ENCODE measurements at regions of chr5 and their contacts with region 1.

Region 1: GRCh38 chr5:147576646-147577535 is 67.0 kb upstream of the DPYSL3 start:
- DNase-seq: peak in 1 of 2 experiments; percentile 91
- H3K4me3 ChIP-seq: no peak overlapping the region
- H3K27ac ChIP-seq: no peak overlapping the region
- H3K4me1 ChIP-seq: peaks cover 12 to 21% (median 15%) of the 10 kb centered on the region in 4 experiments; a peak in 5 of 7 replicates
- H3K27me3 ChIP-seq: no peaks in the 10 kb centered on the region
- CTCF ChIP-seq: peak; percentile 87 to 90 (median 88)
- EP300 ChIP-seq: no peak
- POLR2A ChIP-seq: no peak
- RAD21 ChIP-seq: peak; percentile 69 to 77

Region 2: DNA sequence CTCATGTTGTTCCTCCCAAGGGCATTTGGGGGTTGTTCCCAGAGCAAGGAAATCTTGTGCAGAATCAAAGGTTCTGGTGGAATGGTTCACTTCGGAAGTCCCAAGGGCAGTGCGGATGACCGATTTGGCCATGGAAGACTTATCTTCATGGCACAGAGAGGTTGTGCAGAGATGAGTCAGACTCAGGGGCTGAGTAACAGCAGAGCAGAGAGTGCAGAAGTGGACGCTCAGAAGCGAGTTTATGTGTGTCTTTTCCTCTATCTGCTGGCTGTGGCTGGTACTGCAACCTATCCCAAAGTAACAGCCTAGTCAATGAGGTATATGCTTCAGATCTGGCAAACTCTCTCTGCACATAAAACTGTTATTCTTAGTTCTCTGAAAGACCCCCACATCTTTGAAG is 185.1 kb before region 1 on chr5:
- CTCF ChIA-PET with region 1: interaction called, 12 read pairs
- POLR2A ChIA-PET with region 1: no interaction called
- DNase-seq: no peak
- H3K4me3 ChIP-seq: no peak overlapping the region
- H3K27ac ChIP-seq: no peak overlapping the region
- H3K4me1 ChIP-seq: peaks cover 4 to 10% (median 8%) of the 10 kb centered on the region in 4 experiments; a peak in 5 of 7 replicates
- H3K27me3 ChIP-seq: no peaks in the 10 kb centered on the region; a peak in 1 of 7 replicates
- CTCF ChIP-seq: peak; percentile 2 to 67 (median 16); a peak in 3 of 4 replicates
- EP300 ChIP-seq: no peak
- POLR2A ChIP-seq: peak in 1 of 2 experiments; percentile 45; a peak in 1 of 3 replicates
- RAD21 ChIP-seq: peak; percentile 50 to 65

Region 3: GRCh38 chr5:147417135-147417813 is 159.6 kb before region 1 on chr5:
- CTCF ChIA-PET with region 1: interaction called, 26 read pairs
- POLR2A ChIA-PET with region 1: no interaction called
- DNase-seq: no peak
- H3K4me3 ChIP-seq: no peak overlapping the region
- H3K27ac ChIP-seq: no peak overlapping the region
- H3K4me1 ChIP-seq: no peaks in the 10 kb centered on the region; a peak in 1 of 7 replicates
- H3K27me3 ChIP-seq: no peaks in the 10 kb centered on the region
- CTCF ChIP-seq: no peak
- EP300 ChIP-seq: no peak
- POLR2A ChIP-seq: no peak
- RAD21 ChIP-seq: no peak

Region 4: GRCh38 chr5:147453875-147454814 is 122.7 kb before region 1 on chr5:
- CTCF ChIA-PET with region 1: interaction called, 45 read pairs
- POLR2A ChIA-PET with region 1: interaction called, 14 read pairs
- DNase-seq: peak; percentile 70 to 94
- H3K4me3 ChIP-seq: peak overlapping the region; percentile 80 to 98 (median 94)
- H3K27ac ChIP-seq: peak overlapping the region; percentile 79; the same call in 1 of the 2 replicates
- H3K4me1 ChIP-seq: peaks cover 9 to 30% (median 25%) of the 10 kb centered on the region in 4 experiments; a peak in 6 of 7 replicates
- H3K27me3 ChIP-seq: no peaks in the 10 kb centered on the region
- CTCF ChIP-seq: peak; percentile 70 to 83 (median 70)
- EP300 ChIP-seq: no peak
- POLR2A ChIP-seq: peak in 1 of 2 experiments; percentile 58; a peak in 2 of 3 replicates
- RAD21 ChIP-seq: peak; percentile 76 to 77

Region 5: DNA sequence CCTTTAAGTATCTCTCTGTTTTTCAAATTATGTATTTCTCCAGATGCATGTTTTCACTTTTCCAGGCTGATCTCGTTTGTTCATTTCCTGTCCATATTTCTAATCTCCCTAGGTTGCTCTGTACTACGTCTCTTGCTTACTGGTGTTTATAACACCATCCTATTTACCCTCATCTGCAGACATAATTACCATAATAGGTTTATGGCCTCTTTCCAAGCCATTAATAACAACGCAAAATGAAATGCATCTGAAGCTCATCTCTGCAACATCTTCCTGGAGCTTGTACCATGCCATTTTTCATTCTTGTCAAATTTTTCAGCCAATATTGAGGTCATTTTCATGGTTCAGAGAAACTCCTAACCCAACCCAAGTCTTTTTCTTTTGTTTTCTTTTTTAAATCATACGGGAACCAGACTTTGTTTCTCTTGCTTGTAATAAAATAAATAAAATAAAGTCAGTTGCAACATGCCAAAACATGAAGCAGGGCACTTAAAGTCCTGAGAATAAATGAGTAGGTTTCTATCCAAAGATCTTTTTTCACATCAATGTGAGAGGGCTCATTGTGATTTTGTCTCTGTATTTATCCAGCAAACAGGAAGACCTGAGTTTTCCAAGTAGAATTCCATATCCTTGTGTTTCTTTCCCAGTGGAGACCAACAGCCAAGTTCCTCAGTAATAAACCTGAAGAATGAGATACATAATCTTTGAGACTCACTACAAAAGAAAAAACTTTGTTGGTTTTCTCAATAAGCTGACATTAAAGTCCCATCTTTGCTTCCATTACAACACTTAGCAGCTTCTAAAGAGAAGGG is 104.0 kb before region 1 on chr5:
- CTCF ChIA-PET with region 1: interaction called, 31 read pairs
- POLR2A ChIA-PET with region 1: no interaction called
- DNase-seq: no peak
- H3K4me3 ChIP-seq: no peak overlapping the region
- H3K27ac ChIP-seq: no peak overlapping the region
- H3K4me1 ChIP-seq: peaks cover 0 to 13% (median 8%) of the 10 kb centered on the region in 4 experiments; a peak in 3 of 7 replicates
- H3K27me3 ChIP-seq: no peaks in the 10 kb centered on the region
- CTCF ChIP-seq: no peak
- EP300 ChIP-seq: no peak
- POLR2A ChIP-seq: no peak
- RAD21 ChIP-seq: no peak

Region 6: GRCh38 chr5:147530530-147531389 is 46.1 kb before region 1 on chr5:
- CTCF ChIA-PET with region 1: interaction called, 13 read pairs
- POLR2A ChIA-PET with region 1: no interaction called
- DNase-seq: no peak
- H3K4me3 ChIP-seq: no peak overlapping the region
- H3K27ac ChIP-seq: no peak overlapping the region
- H3K4me1 ChIP-seq: no peaks in the 10 kb centered on the region
- H3K27me3 ChIP-seq: no peaks in the 10 kb centered on the region
- CTCF ChIP-seq: no peak
- EP300 ChIP-seq: no peak
- POLR2A ChIP-seq: no peak
- RAD21 ChIP-seq: no peak

Region 7: GRCh38 chr5:147658293-147658932 is 81.5 kb after region 1 on chr5:
- CTCF ChIA-PET with region 1: no interaction called
- POLR2A ChIA-PET with region 1: no interaction called
- DNase-seq: no peak
- H3K4me3 ChIP-seq: no peak overlapping the region
- H3K27ac ChIP-seq: no peak overlapping the region
- H3K4me1 ChIP-seq: peaks cover 0 to 10% (median 1%) of the 10 kb centered on the region in 4 experiments; a peak in 4 of 7 replicates
- H3K27me3 ChIP-seq: no peaks in the 10 kb centered on the region
- CTCF ChIP-seq: no peak
- EP300 ChIP-seq: no peak
- POLR2A ChIP-seq: no peak
- RAD21 ChIP-seq: no peak

Measured in H1 (cell line).